Naive thymus-derived CD4-positive, alpha-beta T cell (primary cell): ENCODE measurements at regions of chr19 and their contacts with region 1.

Region 1: DNA sequence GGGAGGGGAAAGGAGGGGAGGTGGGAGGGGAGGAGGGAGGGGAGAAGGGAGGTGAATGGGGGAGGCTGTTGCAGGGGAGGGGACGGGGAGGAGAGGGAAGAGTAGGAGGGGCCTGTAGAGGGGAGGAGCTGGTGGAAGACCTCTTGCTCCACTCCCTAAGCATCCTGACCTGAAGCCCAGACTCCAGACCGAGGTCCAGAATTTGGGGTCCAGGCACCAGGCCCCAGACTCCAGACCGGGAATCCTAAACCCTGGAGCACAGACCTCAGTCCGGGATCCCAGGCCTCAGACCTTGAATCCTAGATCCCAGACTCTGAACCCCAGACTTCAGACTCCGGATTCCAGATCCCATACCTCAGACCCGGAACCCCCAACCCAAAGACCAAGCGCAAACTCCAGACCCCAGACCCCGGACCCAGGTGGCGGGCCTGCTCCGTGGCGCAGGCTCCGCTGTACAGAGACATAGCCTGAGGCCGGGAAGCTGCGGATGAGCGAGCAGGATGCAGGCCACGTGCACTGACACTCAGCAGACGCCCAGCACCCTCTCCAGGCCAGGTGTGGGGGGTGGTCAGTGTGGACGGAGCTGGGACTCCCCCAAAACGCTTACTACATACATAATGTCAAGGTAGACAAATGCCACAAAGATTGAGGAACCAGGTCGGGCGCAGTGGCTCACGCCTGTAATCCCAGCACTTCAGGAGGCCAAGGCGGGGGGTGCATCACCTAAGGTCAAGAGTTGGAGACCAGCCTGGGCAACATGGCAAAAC is 710 bp upstream of the BTBD2 start:
- DNase-seq: peak in 7 of 9 donors; percentile 26 to 78 (median 56)
- ATAC-seq: peak; percentile 65
- H3K4me3 ChIP-seq: no peak overlapping the region
- H3K4me3 Mint-ChIP-seq: peak overlapping the region in 9 of 10 donors; percentile 48 to 79 (median 59)
- H3K27ac ChIP-seq: peak overlapping the region; percentile 37
- H3K27ac Mint-ChIP-seq: peak overlapping the region in 8 of 9 donors; percentile 29 to 81 (median 60)
- H3K4me1 ChIP-seq: no peaks in the 10 kb centered on the region
- H3K4me1 Mint-ChIP-seq: peaks cover 4 to 28% (median 16%) of the 10 kb centered on the region in 7 donors
- H3K27me3 ChIP-seq: no peaks in the 10 kb centered on the region
- H3K27me3 Mint-ChIP-seq: no peaks in the 10 kb centered on the region

Region 2: GRCh38 chr19:1929021-1929742 is 87.0 kb before region 1 on chr19:
- CTCF ChIA-PET with region 1: interaction called, 6 read pairs
- POLR2A ChIA-PET with region 1: interaction called, 7 read pairs
- intact Hi-C with region 1: loop called in 1 of 2 experiments (anchors 2 kb)
- DNase-seq: peak; percentile 65 to 86 (median 76)
- ATAC-seq: peak; percentile 93
- H3K4me3 ChIP-seq: peak overlapping the region; percentile 36
- H3K4me3 Mint-ChIP-seq: peak overlapping the region; percentile 71 to 85 (median 80)
- H3K27ac ChIP-seq: peak overlapping the region; percentile 45
- H3K27ac Mint-ChIP-seq: peak overlapping the region in 7 of 9 donors; percentile 23 to 80 (median 32)
- H3K4me1 ChIP-seq: peaks cover 8 to 9% of the 10 kb centered on the region in 2 donors
- H3K4me1 Mint-ChIP-seq: peaks cover 6 to 27% (median 22%) of the 10 kb centered on the region in 7 donors
- H3K27me3 ChIP-seq: no peaks in the 10 kb centered on the region
- H3K27me3 Mint-ChIP-seq: no peaks in the 10 kb centered on the region

Region 3: DNA sequence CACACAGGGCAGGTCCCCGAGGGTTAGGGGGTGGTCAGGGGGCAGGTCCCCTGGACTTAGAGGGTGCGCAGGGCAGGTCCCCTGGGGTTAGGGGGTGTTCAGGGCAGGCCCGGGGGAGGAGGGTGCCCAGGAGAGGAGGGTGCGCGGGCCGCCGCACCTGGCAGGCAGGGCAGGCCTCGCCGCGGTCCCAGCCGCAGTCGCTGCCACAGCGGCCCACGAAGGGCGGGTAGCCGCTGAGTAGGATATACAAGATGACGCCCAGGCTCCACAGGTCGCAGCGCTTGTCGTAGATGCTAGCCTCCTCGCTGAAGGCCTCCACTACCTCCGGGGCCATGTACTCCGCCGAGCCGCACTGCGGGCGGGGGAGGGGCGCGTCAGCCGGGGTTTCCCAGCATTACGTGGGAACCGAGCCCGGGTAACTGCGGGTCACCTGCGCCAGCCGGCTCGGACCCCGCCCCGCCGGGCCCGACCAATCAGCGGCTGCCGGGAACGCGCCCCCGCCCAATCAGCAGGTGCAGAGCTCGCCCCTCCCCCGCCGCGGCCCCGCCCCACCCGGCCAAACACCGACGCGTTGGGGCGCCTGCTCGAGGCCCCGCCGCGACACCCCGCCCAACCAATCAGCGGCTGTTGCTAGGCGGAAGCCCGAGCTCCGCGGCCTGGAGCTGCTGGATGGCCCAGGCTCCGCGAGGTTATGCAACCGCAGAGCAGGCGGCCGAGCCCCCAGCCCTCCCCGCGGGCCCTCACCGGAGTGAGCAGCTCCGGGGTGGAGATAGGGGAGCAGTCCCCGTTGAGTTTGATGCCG is 25.7 kb after region 1 on chr19:
- CTCF ChIA-PET with region 1: interaction called, 9 read pairs
- POLR2A ChIA-PET with region 1: interaction called, 3 read pairs
- intact Hi-C with region 1: loop called (anchors 1 kb)
- DNase-seq: peak; percentile 98 to 100 (median 99)
- ATAC-seq: peak; percentile 91
- H3K4me3 ChIP-seq: peak overlapping the region; percentile 66
- H3K4me3 Mint-ChIP-seq: peak overlapping the region in 9 of 10 donors; percentile 27 to 79 (median 61)
- H3K27ac ChIP-seq: peak overlapping the region; percentile 97
- H3K27ac Mint-ChIP-seq: peak overlapping the region; percentile 69 to 96 (median 92)
- H3K4me1 ChIP-seq: peaks cover 26 to 48% of the 10 kb centered on the region in 2 donors
- H3K4me1 Mint-ChIP-seq: peaks cover 4 to 36% (median 23%) of the 10 kb centered on the region in 7 donors
- H3K27me3 ChIP-seq: no peaks in the 10 kb centered on the region
- H3K27me3 Mint-ChIP-seq: no peaks in the 10 kb centered on the region

Region 4: GRCh38 chr19:2061495-2062381 is 45.5 kb after region 1 on chr19:
- CTCF ChIA-PET with region 1: no interaction called
- POLR2A ChIA-PET with region 1: interaction called, 11 read pairs
- intact Hi-C with region 1: loop called in 1 of 2 experiments (anchors 2 kb)
- DNase-seq: peak; percentile 99 to 100 (median 100)
- ATAC-seq: peak; percentile 94
- H3K4me3 ChIP-seq: peak overlapping the region; percentile 72
- H3K4me3 Mint-ChIP-seq: peak overlapping the region; percentile 91 to 97 (median 94)
- H3K27ac ChIP-seq: peak overlapping the region; percentile 99
- H3K27ac Mint-ChIP-seq: peak overlapping the region; percentile 85 to 99 (median 97)
- H3K4me1 ChIP-seq: peaks cover 32 to 49% of the 10 kb centered on the region in 2 donors
- H3K4me1 Mint-ChIP-seq: peaks cover 20 to 60% (median 24%) of the 10 kb centered on the region in 7 donors
- H3K27me3 ChIP-seq: no peaks in the 10 kb centered on the region
- H3K27me3 Mint-ChIP-seq: no peaks in the 10 kb centered on the region

Region 5: GRCh38 chr19:2084993-2085720 is 68.9 kb after region 1 on chr19:
- CTCF ChIA-PET with region 1: interaction called, 11 read pairs
- POLR2A ChIA-PET with region 1: interaction called, 4 read pairs
- intact Hi-C with region 1: no loop called
- DNase-seq: peak; percentile 68 to 97 (median 95)
- ATAC-seq: peak; percentile 86
- H3K4me3 ChIP-seq: peak overlapping the region; percentile 98
- H3K4me3 Mint-ChIP-seq: peak overlapping the region; percentile 87 to 99 (median 95)
- H3K27ac ChIP-seq: peak overlapping the region; percentile 99
- H3K27ac Mint-ChIP-seq: peak overlapping the region; percentile 92 to 99 (median 96)
- H3K4me1 ChIP-seq: peaks cover 65 to 72% of the 10 kb centered on the region in 2 donors
- H3K4me1 Mint-ChIP-seq: peaks cover 48 to 76% (median 68%) of the 10 kb centered on the region in 7 donors
- H3K27me3 ChIP-seq: no peaks in the 10 kb centered on the region
- H3K27me3 Mint-ChIP-seq: peaks cover 0 to 2% (median 0%) of the 10 kb centered on the region in 5 donors

Region 6: DNA sequence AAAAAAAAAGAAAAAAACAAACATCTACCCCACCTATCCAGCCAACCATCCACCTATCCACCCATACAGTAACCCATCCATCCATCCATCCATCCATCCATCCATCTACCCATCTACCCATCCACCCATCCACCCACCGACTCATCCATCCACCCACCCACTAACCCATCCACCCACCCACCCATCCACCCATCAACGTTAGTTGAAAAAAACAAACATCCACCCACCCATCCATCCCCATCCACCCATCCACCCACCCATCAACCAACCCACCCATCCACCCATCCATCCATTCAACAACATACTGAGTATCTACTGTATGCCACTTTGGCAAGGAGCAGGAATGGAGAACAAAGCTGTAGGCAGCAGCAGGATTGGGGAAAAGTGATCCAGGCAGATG is 141.2 kb after region 1 on chr19:
- CTCF ChIA-PET with region 1: no interaction called
- POLR2A ChIA-PET with region 1: no interaction called
- intact Hi-C with region 1: loop called (anchors 1 to 2 kb)
- DNase-seq: no peak
- ATAC-seq: no peak
- H3K4me3 ChIP-seq: no peak overlapping the region
- H3K4me3 Mint-ChIP-seq: no peak overlapping the region
- H3K27ac ChIP-seq: no peak overlapping the region
- H3K27ac Mint-ChIP-seq: peak overlapping the region in 2 of 9 donors; percentile 38 to 79
- H3K4me1 ChIP-seq: no peaks in the 10 kb centered on the region
- H3K4me1 Mint-ChIP-seq: peaks cover 0 to 13% (median 4%) of the 10 kb centered on the region in 7 donors
- H3K27me3 ChIP-seq: no peaks in the 10 kb centered on the region
- H3K27me3 Mint-ChIP-seq: no peaks in the 10 kb centered on the region